GM10248 (cell line): ENCODE measurements at regions of chr1 and their contacts with region 1.

Region 1: GRCh38 chr1:202576816-202577215 is 133.4 kb downstream of the SYT2 start:
- DNase-seq: no peak
- CTCF ChIP-seq: no peak

Region 2: GRCh38 chr1:202501281-202501680 is 75.5 kb before region 1 on chr1:
- CTCF ChIA-PET with region 1: interaction called, 16 read pairs
- POLR2A ChIA-PET with region 1: no interaction called
- DNase-seq: peak; percentile 7
- CTCF ChIP-seq: peak; percentile 44

Region 3: GRCh38 chr1:202957733-202958543 is 381.1 kb after region 1 on chr1 and contains the start of gene ADIPOR1:
- CTCF ChIA-PET with region 1: no interaction called
- POLR2A ChIA-PET with region 1: no interaction called
- DNase-seq: peak; percentile 99
- CTCF ChIP-seq: peak; percentile 14